Heart right ventricle (tissue), 16 donors: ENCODE measurements at regions of chr12 and their contacts with region 1.

Region 1: DNA sequence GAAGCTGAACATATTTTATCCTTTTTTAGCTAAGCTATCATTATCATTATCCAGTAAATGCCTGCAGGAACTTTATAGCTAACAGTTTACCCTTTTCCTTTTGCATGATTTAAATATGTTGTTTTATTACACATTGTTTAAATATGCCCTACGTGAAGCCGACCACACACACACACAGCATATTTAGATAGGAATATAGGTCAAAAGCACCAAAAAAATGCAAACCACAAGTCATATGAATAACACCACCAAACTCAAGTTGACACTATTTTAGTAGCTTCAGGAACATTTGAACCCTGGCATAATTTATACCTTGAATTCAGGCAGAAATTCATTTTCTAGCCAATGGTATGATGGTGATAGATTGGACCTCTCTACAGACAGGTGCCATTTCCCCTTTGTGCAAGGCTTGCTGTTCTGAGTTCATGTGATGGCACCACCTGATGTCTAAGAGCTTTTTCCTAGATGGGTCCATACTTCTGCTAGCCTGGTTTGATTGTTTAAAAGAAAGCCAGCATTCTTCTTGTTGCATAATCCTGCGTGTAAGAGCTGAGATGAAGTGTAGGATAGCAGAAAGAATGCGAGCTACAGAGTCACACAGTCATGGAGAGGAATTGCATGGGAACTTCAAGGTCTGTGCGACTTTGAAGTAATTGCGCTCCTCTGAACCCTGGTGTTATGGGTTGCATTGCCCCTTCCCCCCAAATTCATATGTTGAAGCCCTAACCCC is 454.8 kb upstream of the SOX5 start:
- DNase-seq: no peak
- ATAC-seq: no peak
- H3K4me3 ChIP-seq: no peak overlapping the region
- H3K27ac ChIP-seq: no peak overlapping the region
- H3K4me1 ChIP-seq: no peaks in the 10 kb centered on the region
- H3K27me3 ChIP-seq: no peaks in the 10 kb centered on the region
- CTCF ChIP-seq: no peak

Region 2: DNA sequence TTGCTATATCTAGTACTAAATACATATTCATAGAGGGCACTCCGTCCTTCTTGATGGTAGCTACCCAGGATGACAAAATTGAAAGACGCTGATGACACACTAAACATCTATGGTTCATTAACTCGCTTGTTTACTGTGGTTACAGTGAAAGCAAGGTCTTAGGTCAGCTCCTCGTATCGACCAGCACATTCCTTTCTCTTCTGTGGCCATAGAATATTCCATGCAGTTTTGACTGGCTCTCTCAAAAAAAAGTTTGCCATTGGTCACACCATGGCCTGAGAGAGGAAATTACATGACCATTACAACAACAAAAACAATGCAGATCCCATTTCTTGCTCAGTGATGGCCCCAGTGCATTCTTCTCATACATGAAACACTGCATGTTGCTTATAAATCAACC is 43.3 kb before region 1 on chr12:
- intact Hi-C with region 1: loop called in 1 of 10 experiments (anchors 1 kb)
- DNase-seq: no peak
- ATAC-seq: no peak
- H3K4me3 ChIP-seq: no peak overlapping the region
- H3K27ac ChIP-seq: no peak overlapping the region
- H3K4me1 ChIP-seq: no peaks in the 10 kb centered on the region
- H3K27me3 ChIP-seq: no peaks in the 10 kb centered on the region
- CTCF ChIP-seq: no peak

Region 3: GRCh38 chr12:24479131-24479530 is 74.9 kb after region 1 on chr12:
- intact Hi-C with region 1: no loop called
- DNase-seq: no peak
- ATAC-seq: no peak
- H3K4me3 ChIP-seq: no peak overlapping the region
- H3K27ac ChIP-seq: no peak overlapping the region
- H3K4me1 ChIP-seq: no peaks in the 10 kb centered on the region
- H3K27me3 ChIP-seq: no peaks in the 10 kb centered on the region
- CTCF ChIP-seq: no peak